Cardiac septum (tissue), 1 donor: ENCODE measurements at regions of chr18 and their contacts with region 1.

Region 1: DNA sequence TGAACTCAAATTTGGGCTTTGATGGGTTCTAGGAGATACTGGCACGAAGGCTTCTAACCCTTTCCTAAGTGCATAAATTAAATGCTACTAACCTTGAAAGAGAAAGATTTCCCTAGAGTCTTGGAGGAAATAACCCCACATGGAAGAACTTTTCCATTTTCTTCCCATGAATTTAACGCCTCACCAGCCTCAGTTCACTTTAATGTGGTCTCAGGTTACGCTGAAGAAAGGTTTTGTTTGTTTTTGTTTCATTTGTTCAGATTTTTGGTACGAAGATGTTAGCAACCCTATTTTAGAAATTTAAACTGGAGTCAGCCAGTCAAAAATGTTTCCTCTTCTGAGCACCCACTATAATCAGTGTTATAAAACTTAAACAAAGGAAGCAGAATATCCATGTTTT is 30.7 kb downstream of the METTL4 start:
- DNase-seq: no peak

Region 2: DNA sequence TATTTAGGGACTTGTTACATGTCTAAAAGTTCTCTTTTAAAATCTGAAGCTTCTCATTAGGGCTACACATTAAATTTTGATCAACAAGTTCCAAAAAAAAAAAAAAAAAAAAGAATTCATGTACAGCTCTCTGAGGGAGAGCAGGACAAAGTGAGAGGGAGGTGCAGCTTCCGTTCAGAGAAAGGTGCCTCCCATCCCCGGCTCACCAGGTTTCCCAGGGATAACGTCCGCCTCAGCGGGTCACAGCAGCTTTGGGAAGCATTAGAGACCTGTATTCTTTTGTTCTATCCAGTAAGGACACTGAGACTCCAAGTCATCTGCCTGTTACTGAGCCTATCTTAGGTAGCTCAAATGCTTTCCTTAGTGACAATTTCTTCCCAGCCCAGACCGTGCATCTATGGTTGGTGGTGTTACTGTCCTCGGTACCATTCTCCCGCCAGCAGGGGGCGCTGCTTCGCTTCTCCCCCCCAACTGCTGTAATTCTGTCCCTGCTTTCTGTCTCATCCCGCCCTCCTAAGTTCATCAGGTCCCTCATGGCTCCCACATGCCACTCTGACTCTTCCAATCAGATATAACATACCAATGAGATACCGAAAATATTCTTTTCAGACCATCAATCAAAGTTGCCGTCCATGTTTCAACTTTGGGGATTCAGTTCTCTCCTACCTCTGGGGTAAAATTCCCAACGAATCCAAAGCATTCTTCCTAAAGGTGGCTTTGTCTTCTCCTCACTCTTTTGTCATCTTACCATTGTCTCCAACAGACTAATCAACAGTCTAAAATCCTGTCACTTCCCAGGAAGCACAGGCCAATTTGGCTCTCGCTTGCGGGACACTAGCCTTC is 435.7 kb before region 1 on chr18:
- intact Hi-C with region 1: loop called (anchors 5 kb)
- DNase-seq: no peak

Region 3: DNA sequence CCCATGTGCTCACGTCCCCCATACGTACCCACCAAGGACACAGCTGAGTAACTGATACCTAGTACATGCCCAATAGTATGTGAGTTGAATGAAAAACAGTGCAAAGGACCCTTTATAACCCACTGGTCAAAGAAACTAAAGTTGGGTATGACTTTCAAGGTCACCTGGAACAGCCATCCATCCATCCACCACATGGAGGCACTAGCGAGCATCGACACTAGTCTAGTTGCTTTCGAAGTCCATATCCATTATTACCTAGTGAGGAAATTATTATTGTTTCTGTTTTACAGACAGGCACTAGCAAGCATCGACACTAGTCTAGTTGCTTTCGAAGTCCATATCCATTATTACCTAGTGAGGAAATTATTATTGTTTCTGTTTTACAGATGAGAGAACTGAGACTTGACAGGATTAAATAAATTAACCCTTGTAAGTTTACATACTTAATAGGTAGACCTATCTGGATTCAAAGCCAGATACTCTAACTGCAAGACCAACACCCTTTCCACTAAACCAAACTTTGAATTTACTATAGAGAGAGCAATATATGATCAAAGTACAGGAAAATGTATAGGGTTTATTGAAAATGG is 202.9 kb before region 1 on chr18:
- intact Hi-C with region 1: loop called (anchors 5 kb)
- DNase-seq: no peak